Activated naive CD8-positive, alpha-beta T cell treated with anti-CD3 and anti-CD28 coated beads, Interleukin-2, amount 10 ng/mL, durations not matched to agents 7 days and 5 days (primary cell): ENCODE measurements at regions of chr10 and their contacts with region 1.

Region 1: DNA sequence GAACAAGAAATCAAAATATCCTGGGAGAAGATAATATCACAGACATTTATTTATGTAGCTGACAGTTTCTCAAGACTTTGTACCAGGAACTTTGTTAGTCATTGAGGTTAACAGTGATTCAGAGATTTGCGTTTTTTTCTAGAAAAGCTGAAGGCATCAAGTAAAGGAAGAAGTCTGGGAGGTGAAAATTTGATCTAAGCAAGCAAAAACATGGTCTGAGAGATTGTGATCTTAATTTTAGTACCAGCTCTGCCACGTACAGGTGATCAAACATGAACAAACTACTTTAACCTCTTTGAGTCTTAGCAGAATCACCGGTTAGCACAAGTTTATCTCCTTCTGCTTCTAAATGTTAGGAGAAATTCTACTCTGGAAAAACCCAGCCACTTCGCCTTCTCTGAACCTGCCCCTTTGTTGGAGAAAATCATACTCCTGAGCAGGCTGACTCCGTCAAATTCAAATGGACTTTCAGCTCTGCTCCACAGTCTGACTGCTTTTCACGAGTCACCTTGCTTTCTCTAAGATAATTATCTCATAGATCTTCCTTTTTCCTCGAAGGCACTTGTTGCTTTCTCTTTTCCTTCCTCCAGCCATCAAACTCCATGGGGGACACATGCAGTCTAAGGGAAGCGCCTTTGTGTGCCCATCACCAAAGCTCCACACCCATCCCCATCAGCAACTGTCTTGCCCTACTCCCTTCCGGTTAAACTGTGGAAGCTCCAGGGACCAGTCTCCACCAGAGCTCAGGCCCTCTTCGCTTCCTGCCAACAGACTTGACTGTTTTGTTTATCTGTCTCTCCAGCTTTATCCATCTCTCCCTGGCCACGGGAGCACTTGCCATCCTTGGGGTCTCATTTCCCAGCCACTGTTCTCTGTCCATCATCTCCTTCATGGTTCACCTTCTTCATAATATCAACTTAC is 86.3 kb downstream of the PRKCQ start:
- DNase-seq: no peak
- ATAC-seq: peak; percentile 8
- H3K4me3 Mint-ChIP-seq: no peak overlapping the region
- H3K27ac Mint-ChIP-seq: no peak overlapping the region
- H3K4me1 Mint-ChIP-seq: peaks cover 36% of the 10 kb centered on the region
- H3K27me3 Mint-ChIP-seq: no peaks in the 10 kb centered on the region

Region 2: GRCh38 chr10:6473901-6474370 is 19.8 kb before region 1 on chr10:
- POLR2A ChIA-PET with region 1: interaction called, 10 read pairs
- DNase-seq: peak; percentile 60
- ATAC-seq: peak; percentile 76
- H3K4me3 Mint-ChIP-seq: peak overlapping the region; percentile 82
- H3K27ac Mint-ChIP-seq: peak overlapping the region; percentile 92
- H3K4me1 Mint-ChIP-seq: peaks cover 65% of the 10 kb centered on the region
- H3K27me3 Mint-ChIP-seq: no peaks in the 10 kb centered on the region

Region 3: DNA sequence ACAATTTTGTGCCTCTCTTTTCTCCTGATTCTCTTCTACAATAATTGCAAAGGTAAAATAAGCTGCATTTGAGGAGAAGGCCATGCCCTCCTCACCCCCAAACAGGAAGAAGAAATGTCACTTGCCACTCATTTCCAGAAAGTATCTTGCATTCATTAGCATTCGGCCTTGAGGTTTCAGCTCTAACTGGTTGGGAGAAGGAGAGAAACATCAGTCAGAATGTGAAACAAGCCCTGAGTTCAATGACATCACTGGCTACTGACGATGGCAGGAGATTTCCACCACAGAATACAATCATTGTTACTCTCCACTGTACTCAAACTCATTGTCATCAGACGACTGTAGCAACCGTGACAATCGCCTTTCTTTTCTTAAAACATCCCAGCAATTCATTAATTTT is 13.5 kb after region 1 on chr10:
- POLR2A ChIA-PET with region 1: no interaction called
- DNase-seq: no peak
- ATAC-seq: peak; percentile 93
- H3K4me3 Mint-ChIP-seq: peak overlapping the region; percentile 65
- H3K27ac Mint-ChIP-seq: peak overlapping the region; percentile 90
- H3K4me1 Mint-ChIP-seq: peaks cover 46% of the 10 kb centered on the region
- H3K27me3 Mint-ChIP-seq: no peaks in the 10 kb centered on the region